Left ventricle myocardium inferior (tissue), 1 donor: ENCODE measurements at regions of chr13 and their contacts with region 1.

Region 1: DNA sequence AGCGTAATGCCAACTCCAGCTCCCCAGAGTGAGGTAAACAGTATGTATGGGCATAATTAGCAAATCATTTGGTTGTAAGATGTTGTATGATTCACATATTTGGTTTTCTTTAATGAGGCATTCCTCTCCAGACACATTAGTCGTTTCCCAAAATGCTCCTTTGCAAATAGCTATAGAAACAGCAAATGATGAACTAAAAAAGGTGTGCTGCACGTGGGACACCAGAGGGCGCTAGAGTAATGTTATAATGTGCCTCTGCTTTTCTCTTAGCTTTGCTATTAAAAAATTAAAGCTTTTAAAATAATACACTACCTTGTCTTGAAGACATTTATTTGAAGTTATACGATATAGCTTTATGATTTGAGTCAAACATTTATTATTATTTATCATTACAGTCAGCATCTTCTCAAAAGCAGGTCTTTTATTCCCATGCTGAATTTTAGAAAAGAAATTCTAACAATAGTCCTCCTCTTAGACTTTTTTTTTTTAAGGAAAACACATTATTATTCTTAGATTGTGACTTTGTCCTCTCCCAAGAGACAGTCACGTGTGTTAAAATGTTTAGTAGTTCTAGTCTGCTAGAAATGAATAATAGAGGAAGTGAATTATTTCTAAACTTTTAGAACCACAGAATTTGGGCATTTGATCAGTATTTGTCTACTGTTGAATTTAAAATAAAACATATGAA is 121.6 kb upstream of the FRY start:
- DNase-seq: no peak
- H3K4me3 ChIP-seq: no peak overlapping the region
- H3K27ac ChIP-seq: peak overlapping the region; percentile 65
- H3K4me1 ChIP-seq: peaks cover 58% of the 10 kb centered on the region
- H3K27me3 ChIP-seq: no peaks in the 10 kb centered on the region
- CTCF ChIP-seq: peak; percentile 92

Region 2: GRCh38 chr13:31301119-31301518 is 608.9 kb before region 1 on chr13:
- intact Hi-C with region 1: no loop called
- DNase-seq: no peak
- H3K4me3 ChIP-seq: no peak overlapping the region
- H3K27ac ChIP-seq: no peak overlapping the region
- H3K4me1 ChIP-seq: no peaks in the 10 kb centered on the region
- H3K27me3 ChIP-seq: no peaks in the 10 kb centered on the region
- CTCF ChIP-seq: no peak

Region 3: DNA sequence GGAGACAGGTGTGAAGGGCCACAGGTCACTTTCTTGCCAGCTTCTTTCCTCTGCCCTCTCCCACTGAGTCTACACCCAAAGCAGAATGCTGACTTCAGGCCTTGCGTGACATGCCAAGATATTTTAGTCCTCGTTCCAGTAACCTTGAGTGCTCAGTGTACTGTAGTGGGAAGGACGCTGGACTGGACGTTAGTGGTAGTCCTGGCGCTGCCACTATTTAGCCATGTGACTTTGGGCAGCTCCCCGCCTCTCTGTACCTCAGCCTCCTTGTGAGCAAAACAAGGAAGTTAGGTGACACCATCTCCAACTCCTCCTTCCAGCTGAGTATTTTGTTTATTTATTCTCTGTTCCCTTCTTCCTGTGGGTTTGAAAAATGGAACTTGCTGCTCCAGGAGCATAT is 207.7 kb after region 1 on chr13:
- intact Hi-C with region 1: loop called (anchors 10 kb)
- DNase-seq: peak; percentile 58
- H3K4me3 ChIP-seq: no peak overlapping the region
- H3K27ac ChIP-seq: peak overlapping the region; percentile 87
- H3K4me1 ChIP-seq: peaks cover 73% of the 10 kb centered on the region
- H3K27me3 ChIP-seq: no peaks in the 10 kb centered on the region
- CTCF ChIP-seq: no peak

Region 4: DNA sequence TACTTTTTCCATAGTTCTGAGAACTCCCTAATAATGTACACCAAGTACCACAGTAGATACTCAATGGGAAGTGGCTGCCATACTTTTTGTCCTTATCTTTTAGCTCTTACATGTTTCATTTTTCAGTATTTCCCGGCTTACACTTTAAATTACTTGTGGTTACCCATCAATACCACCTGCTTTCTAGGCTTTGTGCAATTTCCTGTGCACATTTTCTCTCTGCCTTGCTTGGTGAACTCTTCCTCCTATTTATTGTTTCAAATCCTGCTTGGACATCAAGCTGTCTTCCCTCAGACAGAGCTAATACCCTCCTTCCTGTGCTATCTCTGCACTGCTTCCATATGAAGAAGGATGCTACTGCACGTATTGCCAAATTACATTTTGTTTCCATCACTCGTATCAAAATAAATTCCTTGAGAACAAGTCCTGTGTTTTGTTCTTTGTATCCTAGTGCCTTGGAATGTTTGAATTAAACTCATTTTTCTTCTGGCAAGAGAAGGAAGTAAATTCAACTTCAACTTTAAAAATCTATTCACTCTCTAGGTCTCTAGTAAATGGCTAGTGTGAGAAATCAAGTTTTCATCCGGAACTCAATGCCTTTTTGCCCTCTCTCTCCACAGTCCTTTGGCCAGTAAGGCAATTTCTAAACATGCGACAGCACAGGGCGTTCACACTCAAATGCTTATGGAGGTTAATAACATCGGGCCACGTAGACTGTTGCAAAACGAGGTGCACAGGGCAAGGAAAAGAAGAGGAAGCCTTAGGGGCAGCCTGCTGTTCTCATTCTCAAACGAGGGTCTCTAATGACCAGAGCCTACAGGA is 399.5 kb after region 1 on chr13:
- intact Hi-C with region 1: loop called (anchors 10 kb)
- DNase-seq: no peak
- H3K4me3 ChIP-seq: peak overlapping the region; percentile 48
- H3K27ac ChIP-seq: peak overlapping the region; percentile 17
- H3K4me1 ChIP-seq: peaks cover 4% of the 10 kb centered on the region
- H3K27me3 ChIP-seq: no peaks in the 10 kb centered on the region
- CTCF ChIP-seq: no peak